ENCODE measurements at regions of chr12 and their contacts with region 1.

Region 1: DNA sequence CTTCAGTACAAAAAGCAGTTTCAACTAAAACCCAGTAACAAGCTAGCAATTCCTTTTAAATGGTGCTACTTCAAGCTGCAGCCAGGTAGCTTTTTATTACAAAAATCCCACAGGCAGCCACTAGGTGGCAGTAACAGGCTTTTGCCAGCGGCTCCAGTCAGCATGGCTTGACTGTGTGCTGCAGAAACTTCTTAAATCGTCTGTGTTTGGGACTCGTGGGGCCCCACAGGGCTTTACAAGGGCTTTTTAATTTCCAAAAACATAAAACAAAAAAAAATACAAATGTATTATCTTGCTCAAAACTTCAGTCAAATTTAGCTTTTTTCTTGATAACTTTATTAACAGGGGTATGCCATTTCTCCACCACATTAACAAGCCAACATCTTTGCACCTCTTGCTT is 3.6 kb upstream of the CLEC4E start:
- DNase-seq: peak; percentile 44
- H3K4me3 ChIP-seq: no peak overlapping the region
- H3K27ac ChIP-seq: no peak overlapping the region
- H3K4me1 ChIP-seq: no peaks in the 10 kb centered on the region
- H3K27me3 ChIP-seq: no peaks in the 10 kb centered on the region
- CTCF ChIP-seq: peak; percentile 74 to 85

Region 2: DNA sequence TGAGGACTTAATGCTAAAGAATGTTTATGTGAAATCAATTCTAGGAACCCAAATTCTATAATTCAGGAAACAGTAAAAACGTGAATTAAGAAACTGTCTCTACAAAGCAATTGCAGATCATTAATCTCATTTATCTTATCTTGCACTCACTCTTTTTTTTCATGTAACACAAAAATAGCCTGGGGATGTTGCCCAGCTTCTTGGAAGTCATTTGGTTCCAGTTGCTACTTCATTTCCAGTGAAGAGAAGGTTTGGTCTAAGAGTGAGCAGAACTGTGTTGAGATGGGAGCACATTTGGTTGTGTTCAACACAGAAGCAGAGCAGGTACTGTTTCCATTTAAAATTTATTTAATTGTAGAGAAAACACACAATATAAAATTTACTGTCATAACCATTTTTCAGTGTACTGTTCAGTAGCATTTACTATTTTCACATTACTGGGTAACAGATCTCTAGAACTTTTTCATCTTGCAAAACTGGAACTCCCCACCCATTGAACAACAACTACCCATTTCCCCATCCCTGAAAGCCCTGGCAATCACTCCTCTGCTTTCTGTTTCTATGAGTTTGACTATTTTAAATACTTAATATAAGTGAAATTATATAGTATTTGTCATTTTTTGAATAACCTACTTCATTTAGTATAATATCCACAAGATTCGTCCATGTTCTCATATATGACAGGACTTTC is 78.8 kb before region 1 on chr12:
- CTCF ChIA-PET with region 1: no interaction called
- dilution Hi-C with region 1: no loop called
- in situ Hi-C with region 1: no loop called
- intact Hi-C with region 1: no loop called
- DNase-seq: no peak
- H3K4me3 ChIP-seq: no peak overlapping the region
- H3K27ac ChIP-seq: no peak overlapping the region
- H3K4me1 ChIP-seq: no peaks in the 10 kb centered on the region
- H3K27me3 ChIP-seq: peaks cover 2% of the 10 kb centered on the region
- CTCF ChIP-seq: no peak

Region 3: GRCh38 chr12:8609061-8609570 is 64.8 kb after region 1 on chr12:
- CTCF ChIA-PET with region 1: interaction called, 14 read pairs
- dilution Hi-C with region 1: no loop called
- in situ Hi-C with region 1: loop called (anchors 10 kb)
- intact Hi-C with region 1: loop called (anchors 1 kb)
- DNase-seq: peak; percentile 19
- H3K4me3 ChIP-seq: no peak overlapping the region
- H3K27ac ChIP-seq: no peak overlapping the region
- H3K4me1 ChIP-seq: no peaks in the 10 kb centered on the region
- H3K27me3 ChIP-seq: no peaks in the 10 kb centered on the region
- CTCF ChIP-seq: peak; percentile 87 to 93